Activated T-helper 2 cell treated with anti-CD3 and anti-CD28 coated beads, Interferon-gamma antibody, Interleukin-2, Interleukin-4, amounts not matched to agents 10 μg/mL and 5 μg/mL and 100 μg/mL, durations not matched to agents 14 hours and 24 hours and 36 hours (primary cell): ENCODE measurements at regions of chr2 and their contacts with region 1.

Region 1: GRCh38 chr2:176491172-176491904 is 222.1 kb downstream of the MTX2 start:
- DNase-seq: peak; percentile 13
- H3K4me3 Mint-ChIP-seq: no peak overlapping the region
- H3K27ac Mint-ChIP-seq: peak overlapping the region; percentile 18
- H3K4me1 Mint-ChIP-seq: peaks cover 18% of the 10 kb centered on the region
- H3K27me3 Mint-ChIP-seq: peaks cover 60% of the 10 kb centered on the region

Region 2: DNA sequence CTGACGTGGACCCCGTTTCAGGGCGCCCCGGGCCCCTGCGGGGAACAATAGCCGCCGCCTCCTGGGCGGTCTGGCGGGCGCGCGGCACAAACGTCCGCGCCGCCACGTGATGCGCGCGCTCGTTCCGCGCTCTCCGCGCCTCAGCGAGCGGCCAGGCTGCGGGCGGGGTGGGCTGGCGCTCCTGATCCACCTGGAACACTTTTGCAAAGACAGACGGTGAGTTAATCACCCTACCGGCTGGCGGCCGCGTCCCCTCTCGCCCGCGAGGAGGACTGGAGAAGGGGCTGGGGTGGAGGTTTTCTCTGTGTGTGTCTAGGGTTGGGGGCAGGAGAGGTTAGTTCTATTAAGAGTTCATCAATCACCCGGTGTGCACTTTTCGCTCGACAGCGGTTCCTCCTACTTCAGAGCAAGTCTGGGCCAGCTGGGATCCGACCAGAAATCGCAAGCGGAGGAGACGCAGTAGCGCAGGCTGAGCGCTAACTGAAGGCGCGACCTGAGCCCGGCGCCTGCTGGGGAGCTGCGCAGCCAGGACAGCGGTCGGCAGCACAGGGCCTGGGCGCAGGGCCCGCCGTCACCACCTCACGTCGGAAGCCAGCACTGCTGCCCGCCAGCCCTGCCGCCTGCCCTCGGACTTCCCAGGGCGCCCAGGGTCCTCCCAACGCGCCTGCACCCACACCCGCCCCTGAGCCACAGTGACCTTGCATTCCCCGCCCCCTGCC is 313.1 kb before region 1 on chr2:
- intact Hi-C with region 1: no loop called
- DNase-seq: no peak
- H3K4me3 Mint-ChIP-seq: peak overlapping the region; percentile 27
- H3K27ac Mint-ChIP-seq: no peak overlapping the region
- H3K4me1 Mint-ChIP-seq: peaks cover 9% of the 10 kb centered on the region
- H3K27me3 Mint-ChIP-seq: peaks cover 86% of the 10 kb centered on the region

Region 3: GRCh38 chr2:176508984-176509740 is 17.8 kb after region 1 on chr2:
- intact Hi-C with region 1: loop called (anchors 1 kb)
- DNase-seq: no peak
- H3K4me3 Mint-ChIP-seq: peak overlapping the region; percentile 11
- H3K27ac Mint-ChIP-seq: peak overlapping the region; percentile 75
- H3K4me1 Mint-ChIP-seq: peaks cover 18% of the 10 kb centered on the region
- H3K27me3 Mint-ChIP-seq: peaks cover 28% of the 10 kb centered on the region

Region 4: GRCh38 chr2:177093371-177093770 is 602.0 kb after region 1 on chr2:
- intact Hi-C with region 1: no loop called
- DNase-seq: no peak
- H3K4me3 Mint-ChIP-seq: no peak overlapping the region
- H3K27ac Mint-ChIP-seq: no peak overlapping the region
- H3K4me1 Mint-ChIP-seq: no peaks in the 10 kb centered on the region
- H3K27me3 Mint-ChIP-seq: peaks cover 22% of the 10 kb centered on the region